ENCODE measurements at regions of chr12 and their contacts with region 1.

Region 1: GRCh38 chr12:52050761-52051541 is at the start of gene NR4A1:
- DNase-seq: peak; percentile 87
- ATAC-seq: peak; percentile 82
- H3K4me3 ChIP-seq: peak within 1 kb of the TSS; percentile 62 to 86
- H3K27ac ChIP-seq: peak within 1 kb of the TSS; percentile 92
- H3K4me1 ChIP-seq: peaks cover 22 to 48% of the 10 kb centered on the region in 2 experiments
- H3K27me3 ChIP-seq: no peaks in the 10 kb centered on the region
- CTCF ChIP-seq: 0 out of 6 replicates have a peak, but pooled peaks of 1 of the 3 experiments have one; percentile 11
- POLR2A ChIP-seq: peak; percentile 63
- RAD21 ChIP-seq: no peak
- total RNA-seq, gene NR4A1: 35.3 TPM

Region 2: DNA sequence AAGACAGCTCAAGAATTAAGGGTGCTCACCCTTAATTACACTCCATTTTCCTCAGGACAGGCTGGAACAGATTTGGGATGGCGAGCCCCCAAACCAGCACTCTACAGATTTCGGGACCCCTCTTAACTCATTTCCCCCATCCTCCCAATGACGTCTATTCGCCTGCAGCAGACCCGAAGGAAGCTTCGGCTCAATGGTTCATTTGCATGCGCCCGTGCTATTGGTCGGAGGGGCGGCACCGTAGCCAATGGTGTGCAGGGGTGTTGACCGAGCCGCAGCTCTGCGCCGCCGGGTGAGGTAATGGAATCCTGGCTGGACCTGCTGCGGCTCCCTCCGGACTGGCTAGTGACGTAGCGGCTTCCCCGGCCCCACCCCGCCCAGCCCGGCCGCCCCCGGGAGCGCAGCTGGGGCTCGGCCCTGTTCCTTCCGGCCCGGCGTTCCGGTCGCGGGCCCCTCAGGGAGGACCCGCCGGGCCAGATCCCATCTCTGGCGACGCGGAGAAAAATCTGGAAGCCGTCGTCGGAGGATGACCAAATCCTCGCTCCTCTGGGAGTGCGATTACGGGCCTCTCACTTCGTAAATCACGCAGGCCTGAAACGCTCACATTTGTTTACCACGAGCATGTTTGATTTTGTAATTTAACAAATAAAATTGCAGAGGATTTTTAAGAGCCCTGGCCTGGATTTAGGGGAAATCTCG is 18.0 kb before region 1 on chr12:
- CTCF ChIA-PET with region 1: interaction called, 8 read pairs
- POLR2A ChIA-PET with region 1: interaction called, 40 read pairs
- RAD21 ChIA-PET with region 1: no interaction called
- intact Hi-C with region 1: loop called (anchors 1 kb)
- DNase-seq: peak; percentile 89
- ATAC-seq: peak; percentile 94
- H3K4me3 ChIP-seq: peak overlapping the region; percentile 29 to 47
- H3K27ac ChIP-seq: no peak overlapping the region
- H3K4me1 ChIP-seq: peaks cover 28 to 50% of the 10 kb centered on the region in 2 experiments
- H3K27me3 ChIP-seq: no peaks in the 10 kb centered on the region
- CTCF ChIP-seq: no peak
- POLR2A ChIP-seq: no peak
- RAD21 ChIP-seq: no peak

Region 3: DNA sequence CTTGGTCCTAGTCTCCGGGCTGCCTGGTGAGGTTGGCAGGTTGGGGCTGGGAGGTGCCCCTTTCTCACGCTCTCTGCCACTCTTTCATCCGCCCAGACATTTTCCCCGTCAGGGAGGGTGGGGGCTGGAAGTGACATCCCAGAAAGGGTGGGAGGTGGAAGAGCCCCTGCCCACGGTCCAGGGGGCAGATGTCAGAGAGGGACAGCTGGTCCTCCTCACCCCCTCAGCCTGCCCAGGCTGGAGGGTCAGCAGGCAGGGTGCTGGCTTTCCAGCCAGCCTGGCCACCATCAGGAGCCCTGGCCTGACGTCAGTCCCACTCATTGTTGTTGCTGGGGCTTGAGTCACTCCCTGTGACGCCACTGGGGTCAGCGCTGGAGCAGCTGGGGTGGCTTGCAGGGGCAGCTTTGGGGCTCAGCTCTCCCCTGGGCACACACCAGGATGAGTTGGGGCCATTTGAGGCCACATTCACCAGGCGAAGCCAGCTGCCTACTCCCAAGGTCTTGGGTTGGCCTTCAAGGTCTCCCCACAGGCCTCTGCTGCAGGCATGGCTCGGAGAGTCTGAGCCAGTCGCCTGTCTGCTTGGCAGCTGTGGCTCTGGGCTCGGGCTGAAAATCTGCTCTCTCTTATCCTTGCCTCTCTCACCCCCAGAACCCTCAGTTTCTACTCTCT is 13.2 kb after region 1 on chr12:
- CTCF ChIA-PET with region 1: interaction called, 7 read pairs
- POLR2A ChIA-PET with region 1: interaction called, 15 read pairs
- RAD21 ChIA-PET with region 1: no interaction called
- intact Hi-C with region 1: loop called (anchors 1 kb)
- DNase-seq: no peak
- ATAC-seq: peak; percentile 33; the same call in 1 of the 2 replicates
- H3K4me3 ChIP-seq: no peak overlapping the region
- H3K27ac ChIP-seq: no peak overlapping the region
- H3K4me1 ChIP-seq: peaks cover 0 to 24% of the 10 kb centered on the region in 2 experiments; a peak in 2 of 4 replicates
- H3K27me3 ChIP-seq: no peaks in the 10 kb centered on the region
- CTCF ChIP-seq: no peak
- POLR2A ChIP-seq: no peak
- RAD21 ChIP-seq: no peak